GM12878 (cell line): ENCODE measurements at regions of chr1 and their contacts with region 1.

Region 1: GRCh38 chr1:205141236-205142101 is 19.7 kb upstream of the RBBP5 start:
- DNase-seq: peak; percentile 30
- ATAC-seq: peak; percentile 97
- H3K4me3 ChIP-seq: no peak overlapping the region
- H3K27ac ChIP-seq: no peak overlapping the region
- H3K4me1 ChIP-seq: peaks cover 4% of the 10 kb centered on the region; the same call in 1 of the 2 replicates
- H3K27me3 ChIP-seq: no peaks in the 10 kb centered on the region
- CTCF ChIP-seq: peak; percentile 70 to 79 (median 72)
- EP300 ChIP-seq: no peak
- POLR2A ChIP-seq: no peak
- RAD21 ChIP-seq: peak; percentile 59

Region 2: DNA sequence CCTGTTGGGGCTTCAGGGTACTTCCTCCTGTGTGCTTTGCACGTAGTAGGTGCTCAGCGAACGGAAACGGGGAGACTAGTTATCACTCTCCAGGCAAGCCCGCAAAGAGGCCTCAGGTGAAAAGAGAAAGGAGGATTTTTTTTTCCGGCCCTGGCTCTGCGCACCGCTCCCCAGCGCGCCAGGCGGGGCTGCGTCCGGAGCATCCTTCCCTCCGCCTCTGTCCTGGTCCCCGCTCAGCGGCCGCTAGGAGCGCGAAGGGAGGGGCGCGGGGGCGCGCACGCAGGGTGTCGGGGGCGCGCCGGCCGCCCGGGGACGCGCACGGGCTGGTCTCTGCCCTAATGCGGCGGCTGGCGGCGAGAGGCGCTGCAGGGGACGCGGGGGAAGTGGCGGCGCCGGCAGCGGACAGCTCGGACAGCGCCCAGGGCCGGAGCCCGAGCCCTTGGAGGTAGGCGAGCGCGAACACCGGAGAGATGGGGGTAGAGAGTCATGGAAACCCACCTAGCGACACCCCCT is 313.1 kb before region 1 on chr1:
- CTCF ChIA-PET with region 1: no interaction called
- POLR2A ChIA-PET with region 1: no interaction called
- RAD21 ChIA-PET with region 1: no interaction called
- SMC1A ChIA-PET with region 1: no interaction called
- in situ Hi-C with region 1: no loop called
- intact Hi-C with region 1: no loop called
- DNase-seq: no peak
- ATAC-seq: peak; percentile 61
- H3K4me3 ChIP-seq: no peak overlapping the region
- H3K27ac ChIP-seq: no peak overlapping the region
- H3K4me1 ChIP-seq: no peaks in the 10 kb centered on the region
- H3K27me3 ChIP-seq: peaks cover 9 to 12% of the 10 kb centered on the region in 2 experiments
- CTCF ChIP-seq: no peak
- EP300 ChIP-seq: no peak
- POLR2A ChIP-seq: no peak
- RAD21 ChIP-seq: no peak

Region 3: GRCh38 chr1:204975570-204976235 is 165.8 kb before region 1 on chr1:
- CTCF ChIA-PET with region 1: interaction called, 17 read pairs
- POLR2A ChIA-PET with region 1: no interaction called
- RAD21 ChIA-PET with region 1: interaction called, 4 read pairs
- SMC1A ChIA-PET with region 1: interaction called, 12 read pairs
- in situ Hi-C with region 1: loop called (anchors 5 kb)
- intact Hi-C with region 1: no loop called
- DNase-seq: no peak
- ATAC-seq: peak; percentile 90
- H3K4me3 ChIP-seq: no peak overlapping the region
- H3K27ac ChIP-seq: no peak overlapping the region
- H3K4me1 ChIP-seq: peaks cover 6% of the 10 kb centered on the region
- H3K27me3 ChIP-seq: peaks cover 0 to 5% of the 10 kb centered on the region in 2 experiments; a peak in 3 of 4 replicates
- CTCF ChIP-seq: peak; percentile 84 to 89 (median 88)
- EP300 ChIP-seq: no peak
- POLR2A ChIP-seq: no peak
- RAD21 ChIP-seq: peak; percentile 79

Region 4: GRCh38 chr1:204989266-204990058 is 152.0 kb before region 1 on chr1:
- CTCF ChIA-PET with region 1: interaction called, 57 read pairs
- POLR2A ChIA-PET with region 1: no interaction called
- RAD21 ChIA-PET with region 1: interaction called, 12 read pairs
- SMC1A ChIA-PET with region 1: interaction called, 25 read pairs
- in situ Hi-C with region 1: no loop called
- intact Hi-C with region 1: loop called (anchors 1 kb)
- DNase-seq: no peak
- ATAC-seq: peak; percentile 90
- H3K4me3 ChIP-seq: no peak overlapping the region
- H3K27ac ChIP-seq: no peak overlapping the region
- H3K4me1 ChIP-seq: no peaks in the 10 kb centered on the region; the same call in 1 of the 2 replicates
- H3K27me3 ChIP-seq: peaks cover 2 to 4% of the 10 kb centered on the region in 2 experiments; a peak in 1 of 4 replicates
- CTCF ChIP-seq: peak; percentile 94 to 97 (median 95); a peak in 5 of 6 replicates
- EP300 ChIP-seq: no peak
- POLR2A ChIP-seq: no peak
- RAD21 ChIP-seq: peak; percentile 95

Region 5: GRCh38 chr1:205032508-205032907 is 109.0 kb before region 1 on chr1:
- CTCF ChIA-PET with region 1: no interaction called
- POLR2A ChIA-PET with region 1: no interaction called
- RAD21 ChIA-PET with region 1: no interaction called
- SMC1A ChIA-PET with region 1: no interaction called
- in situ Hi-C with region 1: no loop called
- intact Hi-C with region 1: no loop called
- DNase-seq: no peak
- ATAC-seq: no peak
- H3K4me3 ChIP-seq: no peak overlapping the region
- H3K27ac ChIP-seq: no peak overlapping the region
- H3K4me1 ChIP-seq: no peaks in the 10 kb centered on the region
- H3K27me3 ChIP-seq: peaks cover 0 to 3% of the 10 kb centered on the region in 2 experiments; a peak in 2 of 4 replicates
- CTCF ChIP-seq: no peak
- EP300 ChIP-seq: no peak
- POLR2A ChIP-seq: no peak
- RAD21 ChIP-seq: no peak

Region 6: DNA sequence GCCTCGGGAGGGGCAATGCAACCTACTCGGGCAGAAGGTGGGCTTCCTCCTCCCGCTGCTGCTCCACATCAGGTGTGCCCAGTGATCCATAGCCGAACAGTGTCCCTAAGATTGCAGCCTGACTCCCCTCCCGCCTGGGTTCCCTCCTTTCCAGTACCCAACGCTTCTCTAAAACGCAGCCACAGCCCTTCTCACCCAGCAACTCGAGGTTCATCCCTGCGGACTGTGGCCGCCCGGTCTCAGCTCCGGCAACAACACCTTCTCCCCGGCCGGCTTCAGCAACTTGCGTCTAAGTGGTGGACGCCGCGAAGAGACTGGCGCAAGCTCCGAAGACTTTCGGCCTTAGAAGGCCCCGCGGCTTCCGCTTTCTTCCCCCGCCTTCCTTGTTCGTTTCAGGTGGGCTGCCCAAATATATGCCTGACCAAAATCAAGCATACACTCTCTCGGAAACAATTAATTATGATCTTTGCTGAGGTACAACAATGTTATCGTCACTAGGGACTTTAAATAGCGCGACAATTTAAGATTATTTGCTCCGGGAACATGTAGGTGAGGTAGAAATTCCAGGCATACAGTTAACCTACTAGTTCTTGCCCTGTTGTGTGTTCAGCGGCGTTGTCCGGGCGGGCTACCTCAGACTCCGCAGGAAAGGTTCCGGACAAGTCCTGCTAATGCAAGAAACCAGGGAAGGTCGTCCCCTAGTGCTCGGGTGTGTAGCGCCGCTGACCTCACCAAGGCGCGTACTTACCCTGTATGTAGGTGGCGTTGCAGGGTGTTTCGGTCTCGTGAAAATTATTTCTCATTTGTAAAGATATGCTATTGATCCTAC is 19.6 kb before region 1 on chr1 and contains the start of gene RBBP5:
- CTCF ChIA-PET with region 1: interaction called, 88 read pairs
- POLR2A ChIA-PET with region 1: interaction called, 8 read pairs
- RAD21 ChIA-PET with region 1: interaction called, 6 read pairs
- SMC1A ChIA-PET with region 1: interaction called, 24 read pairs
- in situ Hi-C with region 1: no loop called
- intact Hi-C with region 1: no loop called
- DNase-seq: peak; percentile 94
- ATAC-seq: peak; percentile 97
- H3K4me3 ChIP-seq: peak within 1 kb of the TSS; percentile 96
- H3K27ac ChIP-seq: peak within 1 kb of the TSS; percentile 99
- H3K4me1 ChIP-seq: no peaks in the 10 kb centered on the region; the same call in 1 of the 2 replicates
- H3K27me3 ChIP-seq: no peaks in the 10 kb centered on the region
- CTCF ChIP-seq: peak; percentile 76 to 84 (median 82)
- EP300 ChIP-seq: peak in 1 of 2 experiments; percentile 22; a peak in 2 of 4 replicates
- POLR2A ChIP-seq: peak; percentile 99
- RAD21 ChIP-seq: peak; percentile 55
- polyA plus RNA-seq, gene RBBP5: 10.0 to 11.5 TPM

Region 7: GRCh38 chr1:205158048-205158616 is 16.7 kb after region 1 on chr1:
- CTCF ChIA-PET with region 1: interaction called, 16 read pairs
- POLR2A ChIA-PET with region 1: no interaction called
- RAD21 ChIA-PET with region 1: no interaction called
- SMC1A ChIA-PET with region 1: interaction called, 4 read pairs
- in situ Hi-C with region 1: no loop called
- intact Hi-C with region 1: no loop called
- DNase-seq: no peak
- ATAC-seq: no peak
- H3K4me3 ChIP-seq: no peak overlapping the region
- H3K27ac ChIP-seq: no peak overlapping the region
- H3K4me1 ChIP-seq: no peaks in the 10 kb centered on the region
- H3K27me3 ChIP-seq: no peaks in the 10 kb centered on the region
- CTCF ChIP-seq: no peak
- EP300 ChIP-seq: no peak
- POLR2A ChIP-seq: no peak
- RAD21 ChIP-seq: no peak